ENCODE measurements at regions of chr5 and their contacts with region 1.

Region 1: DNA sequence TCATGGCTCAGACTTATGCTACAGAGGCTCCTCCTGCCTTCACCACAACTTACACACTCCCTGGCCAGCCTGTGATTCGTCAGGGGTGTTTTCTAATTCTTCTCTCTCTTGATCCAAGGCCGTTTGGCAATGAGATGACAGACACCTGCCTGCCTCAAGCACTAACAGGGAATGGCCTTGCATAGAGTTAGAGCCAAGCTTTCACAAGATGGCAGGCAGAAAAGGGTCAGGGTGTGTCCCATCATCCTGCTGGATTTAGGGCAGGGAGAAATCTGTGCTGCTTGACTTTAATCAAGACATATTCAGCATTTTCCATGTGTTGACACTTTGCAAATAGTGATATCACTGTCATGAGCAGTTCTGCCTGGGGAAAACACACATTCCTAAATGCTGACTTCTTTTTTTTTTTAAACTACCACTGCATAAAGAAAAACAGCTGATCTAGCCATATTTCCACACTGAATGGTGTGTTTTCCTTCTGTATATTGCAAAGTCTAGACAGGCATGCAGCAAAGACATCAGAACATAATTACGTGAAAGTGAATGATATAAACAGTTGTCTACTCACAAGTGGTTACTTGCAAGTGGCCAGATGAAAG is 95.0 kb upstream of the SLC25A48 start:
- DNase-seq: peak; percentile 53 to 67
- H3K4me3 ChIP-seq: no peak overlapping the region
- CTCF ChIP-seq: no peak
- POLR2A ChIP-seq: no peak

Region 2: DNA sequence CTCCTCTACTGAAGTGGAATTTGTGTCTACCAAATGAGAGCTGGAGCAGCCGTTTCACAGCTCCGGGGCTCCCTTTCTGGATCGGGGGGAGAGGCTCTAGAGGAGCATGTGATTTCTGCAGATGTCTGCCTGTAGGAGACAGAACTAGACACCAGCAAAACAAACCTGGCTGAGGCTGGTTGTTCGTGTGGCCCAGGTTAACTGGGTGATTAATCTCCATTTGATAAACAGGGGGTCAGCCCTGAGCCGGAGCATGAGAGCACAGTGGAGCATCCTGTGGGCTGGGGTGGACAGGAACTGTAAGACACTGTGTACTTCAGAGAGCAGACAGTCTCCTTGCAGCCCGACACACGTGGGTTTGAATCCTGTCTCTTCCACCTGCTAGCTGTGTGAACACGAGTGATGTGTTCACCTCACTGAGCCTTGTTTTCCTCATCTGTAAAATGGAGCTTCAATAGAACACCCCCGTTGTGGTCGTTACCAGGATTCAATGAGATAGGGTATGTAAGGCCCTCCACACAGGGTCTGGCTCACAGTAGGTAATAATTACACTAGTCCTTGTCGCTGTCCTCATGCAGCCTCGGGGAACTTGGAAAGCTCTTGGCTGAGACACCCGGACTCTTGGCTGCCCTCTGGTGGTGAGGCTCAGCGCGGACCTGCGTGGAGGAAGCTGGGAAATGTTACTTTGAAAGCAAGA is 173.6 kb before region 1 on chr5:
- intact Hi-C with region 1: loop called (anchors 5 kb)
- DNase-seq: peak; percentile 75 to 96
- H3K4me3 ChIP-seq: no peak overlapping the region
- CTCF ChIP-seq: no peak
- POLR2A ChIP-seq: no peak